Right ventricle myocardium inferior (tissue), 1 donor: ENCODE measurements at regions of chr2 and their contacts with region 1.

Region 1: GRCh38 chr2:127355386-127356008 is 32.3 kb downstream of the MAP3K2 start:
- DNase-seq: no peak
- ATAC-seq: no peak

Region 2: GRCh38 chr2:127387655-127388422 is 32.3 kb after region 1 on chr2 and contains the start of gene MAP3K2:
- intact Hi-C with region 1: loop called (anchors 2 kb)
- DNase-seq: peak; percentile 97
- ATAC-seq: peak; percentile 95
- total RNA-seq, gene MAP3K2: 23.4 TPM